Activated B cell treated with CpG ODN at 0.5 μM for 24 hours (primary cell): ENCODE measurements at regions of chr2 and their contacts with region 1.

Region 1: DNA sequence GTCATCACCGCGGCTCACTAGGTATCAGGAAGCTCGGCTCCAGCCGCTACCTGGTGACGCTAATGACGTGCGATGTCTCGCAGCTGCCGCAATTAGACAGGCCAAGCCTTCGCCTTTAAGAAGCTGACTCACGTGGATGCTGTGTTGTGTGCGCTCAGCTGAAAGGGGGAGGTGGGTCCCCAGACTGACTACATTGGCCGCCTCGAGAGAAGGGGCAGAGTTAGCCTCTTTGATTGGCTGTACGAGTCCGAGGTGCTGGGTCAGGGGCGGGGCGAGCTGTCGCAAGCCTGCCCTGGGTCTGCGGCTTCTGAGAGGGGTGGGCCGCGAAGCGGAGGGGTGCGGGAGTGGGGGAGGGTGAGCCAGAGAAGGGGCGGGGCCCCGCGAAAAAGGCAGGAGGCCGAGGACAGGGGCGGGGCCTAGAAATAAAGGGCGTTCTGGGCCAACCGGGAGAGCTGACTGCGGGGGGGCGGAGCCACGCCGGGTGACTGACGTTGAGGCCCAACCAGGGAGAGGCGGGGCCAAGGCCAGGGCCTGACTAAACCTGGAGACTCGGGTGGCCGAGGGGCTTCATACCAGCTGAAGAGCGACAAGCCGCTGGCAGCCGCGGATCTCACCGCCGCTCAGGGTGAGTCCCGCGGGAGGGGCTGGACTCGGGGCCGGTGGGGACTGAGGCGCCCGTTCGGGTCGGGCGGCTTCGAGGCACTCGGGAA is at the start of gene YPEL5:
- DNase-seq: peak; percentile 98
- ATAC-seq: peak; percentile 85
- H3K4me3 Mint-ChIP-seq: peak within 1 kb of the TSS; percentile 86
- H3K27ac Mint-ChIP-seq: peak within 1 kb of the TSS; percentile 99
- H3K4me1 Mint-ChIP-seq: peaks cover 50% of the 10 kb centered on the region
- H3K27me3 Mint-ChIP-seq: no peaks in the 10 kb centered on the region
- CTCF ChIP-seq: no peak
- total RNA-seq, gene YPEL5: 56.7 and 57.4 TPM in 2 replicates

Region 2: DNA sequence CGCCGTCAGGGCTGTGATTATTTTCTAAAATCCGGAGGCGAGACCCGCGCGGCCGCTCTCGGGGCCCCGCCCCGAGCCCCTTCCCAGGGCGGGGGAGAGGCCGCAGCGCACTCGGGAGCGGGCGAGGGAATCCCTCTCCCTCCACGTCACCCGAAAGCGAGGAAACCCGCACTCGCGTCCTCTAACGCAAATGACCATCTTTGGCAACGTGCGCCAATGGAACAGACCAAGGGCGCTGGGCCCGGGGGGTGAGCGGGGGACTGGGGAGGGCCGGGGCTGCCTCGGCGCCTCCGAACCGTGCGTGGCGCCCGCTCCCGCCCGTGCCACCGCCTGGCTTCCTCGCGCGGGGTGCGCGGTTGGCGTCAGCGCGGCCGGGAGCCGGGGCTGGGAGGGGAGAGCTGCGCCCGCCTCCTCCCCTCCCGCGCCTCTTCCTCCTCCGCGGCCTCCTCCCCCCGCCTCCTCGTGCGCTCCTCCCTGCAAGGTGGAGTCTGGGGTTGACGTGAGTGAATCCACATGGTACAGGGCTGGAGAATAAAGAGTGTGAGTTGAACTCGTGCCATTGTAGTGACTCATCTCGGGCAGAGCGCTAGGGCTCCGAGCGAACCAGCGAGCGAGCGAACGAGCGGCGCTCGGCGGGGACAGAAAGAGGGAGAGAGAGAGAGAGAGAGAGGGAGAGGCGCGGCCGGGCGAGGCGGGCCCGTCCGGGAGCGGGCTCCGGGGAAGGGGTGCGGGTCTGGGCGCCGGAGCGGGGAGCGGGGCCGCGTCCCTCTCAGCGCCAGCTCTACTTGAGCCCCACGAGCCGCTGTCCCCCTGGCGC is 1754.1 kb before region 1 on chr2 and contains the start of gene FOSL2:
- CTCF ChIA-PET with region 1: no interaction called
- POLR2A ChIA-PET with region 1: no interaction called
- intact Hi-C with region 1: loop called (anchors 5 kb)
- DNase-seq: peak; percentile 78
- ATAC-seq: peak; percentile 84
- H3K4me3 Mint-ChIP-seq: peak within 1 kb of the TSS; percentile 86
- H3K27ac Mint-ChIP-seq: peak within 1 kb of the TSS; percentile 89
- H3K4me1 Mint-ChIP-seq: peaks cover 17% of the 10 kb centered on the region
- H3K27me3 Mint-ChIP-seq: peaks cover 10% of the 10 kb centered on the region
- CTCF ChIP-seq: no peak
- total RNA-seq, gene FOSL2: 2.7 and 3.8 TPM in 2 replicates

Region 3: DNA sequence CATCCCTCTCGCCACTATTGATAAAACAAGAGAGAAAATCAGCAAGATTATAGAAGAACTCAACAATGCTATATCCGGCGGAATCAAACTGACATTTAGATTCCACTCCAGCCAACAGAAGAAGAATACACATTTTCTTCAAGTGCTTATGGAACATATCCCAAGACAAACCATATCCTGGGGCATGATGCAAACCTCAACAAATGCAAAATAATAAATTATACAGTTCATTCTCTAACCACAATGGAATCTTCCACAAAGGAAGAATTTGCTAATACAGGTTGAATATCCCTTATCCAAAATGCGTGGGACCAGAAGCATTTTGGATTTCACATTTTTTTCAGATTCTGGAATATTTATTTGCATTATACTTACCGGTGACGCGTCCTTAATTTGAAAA is 51.2 kb before region 1 on chr2:
- CTCF ChIA-PET with region 1: no interaction called
- POLR2A ChIA-PET with region 1: no interaction called
- intact Hi-C with region 1: loop called (anchors 1 kb)
- DNase-seq: no peak
- ATAC-seq: no peak
- H3K4me3 Mint-ChIP-seq: no peak overlapping the region
- H3K27ac Mint-ChIP-seq: no peak overlapping the region
- H3K4me1 Mint-ChIP-seq: no peaks in the 10 kb centered on the region
- H3K27me3 Mint-ChIP-seq: peaks cover 21% of the 10 kb centered on the region
- CTCF ChIP-seq: no peak

Region 4: DNA sequence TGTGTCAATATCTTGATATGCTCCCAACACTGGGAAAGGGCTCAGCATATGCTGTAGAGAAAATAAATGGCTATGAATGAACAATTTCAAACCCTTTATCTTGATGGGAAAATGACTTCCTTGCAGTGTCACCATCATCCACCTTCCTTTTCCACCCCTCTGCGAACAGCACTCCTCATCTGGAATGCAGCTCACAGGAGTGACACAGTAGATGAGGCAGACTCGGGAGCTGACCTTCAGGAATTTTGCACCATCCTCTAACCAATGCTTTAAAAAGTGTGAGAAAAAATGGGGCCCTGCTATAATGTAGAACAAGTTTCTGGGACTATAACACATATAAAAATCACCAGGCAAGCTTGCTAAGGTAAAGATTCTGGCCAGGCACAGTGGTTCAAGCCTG is 41.0 kb before region 1 on chr2:
- CTCF ChIA-PET with region 1: no interaction called
- POLR2A ChIA-PET with region 1: no interaction called
- intact Hi-C with region 1: no loop called
- DNase-seq: no peak
- ATAC-seq: no peak
- H3K4me3 Mint-ChIP-seq: no peak overlapping the region
- H3K27ac Mint-ChIP-seq: no peak overlapping the region
- H3K4me1 Mint-ChIP-seq: no peaks in the 10 kb centered on the region
- H3K27me3 Mint-ChIP-seq: peaks cover 18% of the 10 kb centered on the region
- CTCF ChIP-seq: no peak

Region 5: DNA sequence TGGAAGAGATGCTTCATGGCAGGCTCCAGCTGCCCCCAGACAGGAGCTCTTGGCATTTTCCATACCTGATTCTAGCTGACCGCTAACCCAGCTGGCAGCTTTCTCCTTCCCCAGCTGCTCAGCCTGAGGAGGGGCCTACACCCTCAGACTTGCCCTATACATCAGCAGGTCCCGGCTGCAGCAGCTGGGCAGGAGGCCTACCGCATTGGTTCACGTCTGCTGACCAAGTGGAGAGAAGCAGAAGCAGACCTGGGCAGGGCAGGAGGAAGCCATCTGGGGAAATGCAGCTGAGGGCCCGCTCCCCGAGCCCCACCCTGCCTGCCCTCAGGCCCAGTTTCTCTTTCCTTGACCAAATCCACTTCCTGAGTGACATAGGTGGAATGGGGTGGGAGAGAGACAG is 135.5 kb after region 1 on chr2:
- CTCF ChIA-PET with region 1: no interaction called
- POLR2A ChIA-PET with region 1: interaction called, 5 read pairs
- intact Hi-C with region 1: loop called (anchors 1 kb)
- DNase-seq: peak; percentile 70
- ATAC-seq: peak; percentile 96
- H3K4me3 Mint-ChIP-seq: peak overlapping the region; percentile 61
- H3K27ac Mint-ChIP-seq: peak overlapping the region; percentile 82
- H3K4me1 Mint-ChIP-seq: peaks cover 98% of the 10 kb centered on the region
- H3K27me3 Mint-ChIP-seq: no peaks in the 10 kb centered on the region
- CTCF ChIP-seq: no peak

Region 6: DNA sequence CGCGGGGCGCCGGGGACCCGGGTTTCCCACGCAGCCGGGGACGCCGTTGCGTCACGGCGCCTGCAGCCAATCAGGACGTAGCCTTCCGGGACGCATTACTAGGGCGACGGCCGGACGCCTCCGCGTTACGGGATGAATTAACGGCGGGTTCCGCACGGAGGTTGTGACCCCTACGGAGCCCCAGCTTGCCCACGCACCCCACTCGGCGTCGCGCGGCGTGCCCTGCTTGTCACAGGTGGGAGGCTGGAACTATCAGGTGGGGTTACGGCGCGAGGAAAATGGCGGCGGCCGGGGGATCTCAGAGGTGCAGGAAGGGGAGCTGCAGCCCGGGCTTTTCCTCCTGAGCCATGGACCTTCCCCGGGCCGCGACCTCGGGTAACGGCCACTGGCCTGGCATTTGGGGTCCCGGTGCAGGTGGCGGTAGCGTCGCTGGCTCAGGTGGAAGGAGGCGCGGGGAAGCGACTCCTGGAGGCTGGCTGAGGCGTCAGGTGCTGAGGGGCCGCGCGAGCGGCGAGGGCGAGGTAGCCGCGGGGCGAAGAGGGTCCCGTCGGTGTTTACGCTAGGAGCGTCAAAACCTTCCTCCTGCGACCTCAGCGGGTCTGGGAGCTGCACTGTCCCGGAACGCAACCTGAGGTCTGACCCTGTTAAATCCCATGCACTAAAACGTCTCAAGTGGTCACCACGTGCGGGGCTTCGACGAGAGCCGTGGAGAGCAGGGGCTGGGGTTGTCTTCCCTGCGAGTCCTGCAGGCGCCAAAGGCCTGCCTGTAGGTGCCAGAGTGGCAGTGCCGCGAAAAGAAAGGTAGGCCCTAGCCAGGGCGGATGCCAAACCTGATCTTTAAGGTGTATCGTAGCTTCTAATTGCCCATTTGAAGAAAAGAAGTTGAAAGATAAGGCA is 300.8 kb after region 1 on chr2 and contains the start of gene LCLAT1:
- CTCF ChIA-PET with region 1: no interaction called
- POLR2A ChIA-PET with region 1: no interaction called
- intact Hi-C with region 1: loop called (anchors 2 kb)
- DNase-seq: peak; percentile 80
- ATAC-seq: peak; percentile 94
- H3K4me3 Mint-ChIP-seq: peak within 1 kb of the TSS; percentile 96
- H3K27ac Mint-ChIP-seq: peak within 1 kb of the TSS; percentile 95
- H3K4me1 Mint-ChIP-seq: peaks cover 25% of the 10 kb centered on the region
- H3K27me3 Mint-ChIP-seq: no peaks in the 10 kb centered on the region
- CTCF ChIP-seq: no peak
- total RNA-seq, gene LCLAT1: 20.1 and 25.9 TPM in 2 replicates

Region 7: DNA sequence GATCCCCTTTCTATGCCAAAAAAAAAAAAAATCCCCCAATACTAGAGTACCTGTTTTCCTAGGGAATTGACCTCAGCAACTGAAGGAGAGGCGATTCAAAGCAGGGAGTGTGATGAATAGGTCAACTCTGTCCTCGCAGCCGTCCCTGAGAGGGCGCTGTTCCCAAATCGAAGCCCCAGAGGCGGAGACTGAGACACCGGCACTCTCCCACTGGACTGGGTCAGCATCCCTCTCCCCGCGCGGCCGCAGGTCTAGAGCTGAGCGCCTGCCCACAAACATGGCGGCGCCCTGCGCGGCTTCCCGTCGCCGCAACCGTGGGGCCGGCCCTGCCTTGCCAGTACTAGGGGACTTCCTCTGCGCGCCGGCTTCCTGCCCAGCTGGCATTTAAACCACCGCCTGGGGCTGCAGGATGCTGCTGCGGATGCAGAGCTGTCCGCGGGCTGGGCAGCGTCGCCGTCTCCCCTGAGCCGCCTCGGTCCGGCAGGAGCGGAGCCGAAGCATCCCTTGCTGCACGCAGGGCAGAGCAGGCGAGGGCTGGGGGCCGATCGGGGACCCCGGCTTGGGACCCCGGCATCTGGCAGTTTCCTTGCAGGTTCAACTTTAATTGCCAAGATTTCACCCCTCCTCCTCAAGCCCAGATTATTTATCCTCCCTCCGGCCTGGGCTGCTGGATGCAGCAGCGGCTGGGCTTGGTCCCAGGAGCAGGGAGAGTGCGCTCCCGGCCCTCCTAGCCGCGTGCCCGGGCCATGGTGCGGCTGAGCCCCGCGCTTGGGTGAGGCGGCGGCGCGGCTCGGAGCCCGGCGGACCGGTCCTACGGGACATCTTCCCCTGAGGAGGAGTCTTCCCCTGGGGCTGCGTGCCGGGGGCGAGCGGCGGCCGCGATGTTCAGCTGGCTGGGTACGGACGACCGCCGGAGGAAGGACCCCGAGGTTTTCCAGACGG is 1087.4 kb after region 1 on chr2 and contains the start of gene EHD3:
- CTCF ChIA-PET with region 1: no interaction called
- POLR2A ChIA-PET with region 1: interaction called, 13 read pairs
- intact Hi-C with region 1: no loop called
- DNase-seq: peak; percentile 85
- ATAC-seq: peak; percentile 98
- H3K4me3 Mint-ChIP-seq: peak within 1 kb of the TSS; percentile 85
- H3K27ac Mint-ChIP-seq: peak within 1 kb of the TSS; percentile 82
- H3K4me1 Mint-ChIP-seq: peaks cover 44% of the 10 kb centered on the region
- H3K27me3 Mint-ChIP-seq: no peaks in the 10 kb centered on the region
- CTCF ChIP-seq: no peak
- total RNA-seq, gene EHD3: 38.1 and 40.3 TPM in 2 replicates

Region 8: GRCh38 chr2:32010670-32011484 is 1864.3 kb after region 1 on chr2 and contains the start of gene MEMO1:
- CTCF ChIA-PET with region 1: no interaction called
- POLR2A ChIA-PET with region 1: interaction called, 3 read pairs
- intact Hi-C with region 1: loop called (anchors 5 kb)
- DNase-seq: peak; percentile 93
- ATAC-seq: peak; percentile 81
- H3K4me3 Mint-ChIP-seq: peak within 1 kb of the TSS; percentile 91
- H3K27ac Mint-ChIP-seq: peak within 1 kb of the TSS; percentile 96
- H3K4me1 Mint-ChIP-seq: peaks cover 39% of the 10 kb centered on the region
- H3K27me3 Mint-ChIP-seq: no peaks in the 10 kb centered on the region
- CTCF ChIP-seq: no peak
- total RNA-seq, gene MEMO1: 68.7 and 71.6 TPM in 2 replicates